ENCODE measurements at regions of chr19 and their contacts with region 1.

Region 1: DNA sequence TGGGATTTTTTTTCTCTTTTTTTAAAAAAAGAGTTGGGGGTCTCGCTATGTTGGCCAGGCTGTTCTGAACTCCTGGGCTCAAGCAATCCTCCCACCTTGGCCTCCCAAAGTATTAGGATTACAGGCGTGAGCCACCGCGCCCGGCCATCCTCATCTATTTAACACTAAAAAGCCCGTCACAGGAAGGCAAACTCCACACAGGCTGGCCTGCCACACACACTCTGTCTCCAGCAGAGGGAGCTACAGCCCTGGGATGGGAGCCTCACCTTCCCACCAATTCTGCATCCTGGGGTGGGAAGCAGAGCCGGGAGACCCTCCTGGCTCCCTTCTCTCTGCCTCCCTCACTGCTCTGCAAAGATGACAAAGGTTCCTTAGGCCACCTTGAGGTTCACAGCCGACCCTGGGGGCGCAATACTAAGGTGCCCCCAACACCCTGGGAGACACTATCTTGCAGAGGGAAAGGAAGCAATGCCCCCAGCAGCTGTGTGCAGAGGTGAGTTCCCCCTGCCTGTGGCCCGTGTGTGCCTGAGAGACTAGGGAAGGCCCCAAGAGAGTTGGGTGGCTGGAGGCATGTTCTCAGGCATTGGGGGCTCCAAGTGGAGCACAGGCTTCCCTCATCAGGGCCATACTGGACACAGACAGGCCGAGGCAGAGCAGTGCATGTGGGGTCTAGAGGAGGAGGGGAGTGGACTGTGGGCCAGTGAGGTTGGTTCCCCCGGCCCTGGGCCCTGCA is 27.4 kb upstream of the TIMM44 start:
- DNase-seq: peak in 5 of 14 experiments; percentile 6 to 51 (median 29)
- ATAC-seq: peak; percentile 29
- H3K4me3 ChIP-seq: no peak overlapping the region
- H3K4me3 Mint-ChIP-seq: no peak overlapping the region
- H3K27ac ChIP-seq: no peak overlapping the region
- H3K27ac Mint-ChIP-seq: no peak overlapping the region
- H3K4me1 ChIP-seq: no peaks in the 10 kb centered on the region
- H3K4me1 Mint-ChIP-seq: no peaks in the 10 kb centered on the region
- H3K27me3 ChIP-seq: no peaks in the 10 kb centered on the region
- H3K27me3 Mint-ChIP-seq: no peaks in the 10 kb centered on the region
- CTCF ChIP-seq: peak; percentile 62

Region 2: DNA sequence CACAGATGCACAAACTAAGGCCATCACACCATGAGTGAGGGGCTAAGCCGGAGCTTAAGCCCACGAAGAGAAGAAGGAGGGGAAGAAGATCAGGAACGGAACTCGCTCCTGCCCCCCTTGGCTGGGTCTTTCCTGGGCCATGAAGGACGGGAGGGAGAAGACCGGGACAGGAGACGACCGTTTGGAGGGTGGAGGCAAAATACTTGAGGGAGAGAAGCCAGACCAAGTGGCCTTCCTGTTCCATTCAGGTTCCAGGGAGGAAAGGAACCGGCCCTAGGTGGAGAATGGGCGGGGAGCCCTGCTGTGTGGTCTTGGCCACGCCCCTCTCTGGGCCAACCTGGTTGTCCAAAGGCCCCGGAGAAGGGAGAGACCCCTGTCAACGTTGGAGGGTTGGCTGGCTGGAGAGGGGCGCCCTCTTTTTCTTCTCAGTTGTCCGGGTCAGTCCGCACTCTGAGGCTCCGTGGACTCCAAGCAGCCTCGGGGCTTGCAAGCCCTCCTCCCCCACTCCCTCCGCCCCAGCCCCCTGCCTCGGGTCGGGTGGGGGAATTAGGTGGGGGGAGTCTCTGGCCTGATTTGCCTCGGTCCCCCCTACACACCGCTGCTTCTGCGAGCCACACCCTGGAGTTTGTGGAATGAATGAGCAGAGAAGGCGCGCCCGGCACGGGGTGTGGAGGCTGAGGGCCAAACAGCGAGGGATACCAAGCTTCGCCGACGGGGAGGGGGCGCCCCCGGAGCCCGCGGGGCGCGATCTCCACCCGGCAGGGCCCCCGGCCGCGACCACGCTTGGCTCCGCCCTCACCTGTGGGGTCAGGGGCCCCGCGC is 177.7 kb after region 1 on chr19:
- CTCF ChIA-PET with region 1: no interaction called
- POLR2A ChIA-PET with region 1: no interaction called
- intact Hi-C with region 1: loop called in 1 of 2 experiments (anchors 10 kb)
- DNase-seq: no peak
- ATAC-seq: no peak
- H3K4me3 ChIP-seq: no peak overlapping the region
- H3K4me3 Mint-ChIP-seq: peak overlapping the region; percentile 56
- H3K27ac ChIP-seq: no peak overlapping the region
- H3K27ac Mint-ChIP-seq: no peak overlapping the region
- H3K4me1 ChIP-seq: peaks cover 6% of the 10 kb centered on the region
- H3K4me1 Mint-ChIP-seq: peaks cover 4% of the 10 kb centered on the region
- H3K27me3 ChIP-seq: peaks cover 30 to 51% of the 10 kb centered on the region in 2 experiments
- H3K27me3 Mint-ChIP-seq: peaks cover 59% of the 10 kb centered on the region
- CTCF ChIP-seq: no peak